ENCODE measurements at regions of chr19 and their contacts with region 1.

Region 1: DNA sequence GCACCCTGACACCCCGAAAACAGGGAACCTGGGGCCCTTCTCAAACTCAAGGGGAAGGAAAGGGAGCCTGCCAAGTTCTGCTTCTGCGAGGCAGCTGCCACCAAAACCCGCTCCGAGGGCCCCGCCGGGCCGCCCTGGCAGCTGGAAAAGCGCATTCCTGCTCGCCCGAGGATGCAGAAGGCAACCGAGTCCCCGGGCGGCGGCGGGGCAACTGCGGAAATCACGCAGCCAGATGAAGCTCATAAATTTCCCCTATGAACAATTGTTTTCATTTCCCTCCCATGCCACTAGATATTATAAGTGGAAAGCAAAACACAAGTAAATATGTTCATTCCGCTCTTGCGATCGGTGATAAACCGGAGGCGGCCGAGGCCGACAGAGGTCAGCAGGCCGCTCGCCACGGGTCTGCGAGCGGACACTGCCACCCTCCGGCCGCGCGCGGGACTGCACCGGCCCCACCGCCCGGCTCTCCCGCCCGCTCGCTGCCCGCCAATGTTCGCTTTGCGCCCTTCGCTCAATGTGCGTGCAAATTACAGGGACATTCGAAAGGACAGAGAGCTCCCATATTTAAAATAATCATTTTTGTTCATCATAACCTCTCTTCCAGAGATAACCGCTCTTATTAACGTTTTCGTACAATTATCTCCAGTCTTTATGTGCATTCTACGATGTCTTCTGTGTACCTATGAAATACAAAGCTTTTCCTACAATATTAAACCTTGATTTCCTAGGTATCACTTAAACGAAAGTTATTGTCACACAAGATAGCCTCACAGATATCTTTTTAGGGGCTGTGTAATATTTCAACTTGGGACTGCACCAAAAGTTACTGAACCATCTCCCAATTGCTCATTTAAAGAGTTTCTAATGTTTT is 120.8 kb upstream of the ZNF507 start:
- DNase-seq: peak; percentile 54
- ATAC-seq: peak; percentile 87
- H3K4me3 Mint-ChIP-seq: peak overlapping the region; percentile 45
- H3K27ac Mint-ChIP-seq: no peak overlapping the region
- H3K4me1 Mint-ChIP-seq: peaks cover 7% of the 10 kb centered on the region
- H3K27me3 Mint-ChIP-seq: peaks cover 44% of the 10 kb centered on the region

Region 2: DNA sequence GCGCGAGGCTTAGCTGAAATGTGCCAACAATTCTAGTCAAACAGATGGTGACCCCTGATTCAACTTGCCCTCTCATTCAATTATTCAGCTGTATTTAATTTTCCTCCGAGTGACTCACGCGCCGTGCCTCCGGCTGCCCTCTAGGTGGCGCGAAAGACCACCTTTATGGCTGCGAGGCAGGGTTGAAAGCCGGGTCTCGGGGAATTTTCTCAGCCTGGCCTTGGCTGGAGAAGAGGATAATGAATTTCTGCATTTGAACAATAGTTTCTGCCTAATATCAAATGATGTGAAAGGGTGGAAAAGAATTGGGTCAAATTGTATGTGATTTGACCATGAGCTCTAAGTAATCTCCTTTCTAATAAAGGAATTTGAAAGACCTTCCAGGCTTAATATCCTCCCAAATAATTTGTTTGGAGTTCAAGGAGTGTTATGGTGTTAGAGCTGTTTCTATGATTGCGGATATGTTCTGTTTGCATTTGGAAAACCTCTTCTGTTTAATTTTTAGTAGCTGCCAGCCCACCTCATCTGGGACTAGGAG is 1541.5 kb before region 1 on chr19:
- CTCF ChIA-PET with region 1: interaction called, 29 read pairs
- DNase-seq: peak; percentile 65
- ATAC-seq: no peak
- H3K4me3 Mint-ChIP-seq: no peak overlapping the region
- H3K27ac Mint-ChIP-seq: no peak overlapping the region
- H3K4me1 Mint-ChIP-seq: no peaks in the 10 kb centered on the region
- H3K27me3 Mint-ChIP-seq: peaks cover 13% of the 10 kb centered on the region